CD4-positive, alpha-beta T cell (primary cell): ENCODE measurements at regions of chr2 and their contacts with region 1.

Region 1: DNA sequence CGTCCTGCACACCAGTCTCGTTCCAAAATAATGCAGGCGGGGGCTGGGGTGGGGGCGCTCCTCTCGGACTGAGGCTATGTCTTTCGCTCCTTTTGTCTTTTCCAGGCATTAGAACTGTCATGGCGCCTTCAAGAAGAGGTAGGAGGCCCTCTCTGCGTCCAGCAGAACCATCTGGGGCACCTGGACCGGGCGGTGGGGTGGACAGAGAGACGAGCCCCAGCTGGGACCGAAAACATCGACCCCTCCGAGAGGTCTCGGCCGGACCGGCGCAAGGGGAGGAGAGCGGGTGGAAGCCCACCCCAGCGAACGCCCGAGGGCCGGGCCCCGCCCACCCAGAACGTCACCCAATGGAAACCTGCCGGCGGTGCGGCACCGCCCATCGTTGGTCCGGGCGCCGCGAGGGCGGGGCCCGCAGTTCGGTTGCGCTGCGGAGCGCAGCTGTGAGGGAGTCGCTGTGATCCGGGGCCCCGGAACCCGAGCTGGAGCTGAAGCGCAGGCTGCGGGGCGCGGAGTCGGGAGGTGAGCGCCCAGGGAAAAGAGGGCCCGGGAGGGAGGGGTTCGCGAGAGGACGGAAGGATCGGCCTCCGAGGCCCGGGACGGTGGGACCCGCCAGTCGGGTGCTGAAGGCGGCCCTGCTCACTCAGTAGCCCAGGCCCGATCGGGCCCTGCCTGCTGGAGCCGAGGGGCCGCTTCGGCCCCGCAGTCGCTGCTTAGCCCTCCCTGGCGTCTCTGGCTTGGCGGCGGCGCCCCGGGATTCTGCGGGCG is at the start of gene NRBP1:
- DNase-seq: peak; percentile 77 to 95 (median 90)
- ATAC-seq: peak; percentile 93
- H3K4me3 ChIP-seq: peak within 1 kb of the TSS; percentile 95
- H3K4me3 Mint-ChIP-seq: peak within 1 kb of the TSS; percentile 100
- H3K27ac ChIP-seq: peak within 1 kb of the TSS; percentile 80 to 90
- H3K27ac Mint-ChIP-seq: peak within 1 kb of the TSS; percentile 96
- H3K4me1 ChIP-seq: peaks cover 40% of the 10 kb centered on the region
- H3K4me1 Mint-ChIP-seq: peaks cover 41% of the 10 kb centered on the region
- H3K27me3 ChIP-seq: no peaks in the 10 kb centered on the region
- H3K27me3 Mint-ChIP-seq: no peaks in the 10 kb centered on the region
- CTCF ChIP-seq: no peak
- total RNA-seq, gene NRBP1: 169 to 181 TPM

Region 2: GRCh38 chr2:27356382-27357181 is 71.8 kb before region 1 on chr2 and contains the start of gene GTF3C2:
- CTCF ChIA-PET with region 1: interaction called, 3 read pairs
- POLR2A ChIA-PET with region 1: interaction called, 7 read pairs
- intact Hi-C with region 1: loop called in 1 of 2 experiments (anchors 2 kb)
- DNase-seq: peak; percentile 82 to 97 (median 88)
- ATAC-seq: peak; percentile 78
- H3K4me3 ChIP-seq: peak within 1 kb of the TSS; percentile 86
- H3K4me3 Mint-ChIP-seq: peak within 1 kb of the TSS; percentile 96
- H3K27ac ChIP-seq: peak within 1 kb of the TSS; percentile 87 to 89
- H3K27ac Mint-ChIP-seq: peak within 1 kb of the TSS; percentile 99
- H3K4me1 ChIP-seq: peaks cover 44% of the 10 kb centered on the region
- H3K4me1 Mint-ChIP-seq: peaks cover 56% of the 10 kb centered on the region
- H3K27me3 ChIP-seq: no peaks in the 10 kb centered on the region
- H3K27me3 Mint-ChIP-seq: no peaks in the 10 kb centered on the region
- CTCF ChIP-seq: no peak
- total RNA-seq, gene GTF3C2: 54.6 to 56.8 TPM

Region 3: GRCh38 chr2:27390822-27391679 is 37.3 kb before region 1 on chr2:
- CTCF ChIA-PET with region 1: interaction called, 5 read pairs
- POLR2A ChIA-PET with region 1: interaction called, 8 read pairs
- intact Hi-C with region 1: loop called in 1 of 2 experiments (anchors 5 kb)
- DNase-seq: peak in 3 of 14 experiments; percentile 73 to 77 (median 74)
- ATAC-seq: peak; percentile 80
- H3K4me3 ChIP-seq: no peak overlapping the region
- H3K4me3 Mint-ChIP-seq: peak overlapping the region; percentile 32
- H3K27ac ChIP-seq: peak overlapping the region; percentile 47 to 52
- H3K27ac Mint-ChIP-seq: peak overlapping the region; percentile 86
- H3K4me1 ChIP-seq: peaks cover 25% of the 10 kb centered on the region
- H3K4me1 Mint-ChIP-seq: peaks cover 32% of the 10 kb centered on the region
- H3K27me3 ChIP-seq: no peaks in the 10 kb centered on the region
- H3K27me3 Mint-ChIP-seq: no peaks in the 10 kb centered on the region
- CTCF ChIP-seq: no peak

Region 4: GRCh38 chr2:27441958-27442919 is 13.8 kb after region 1 on chr2 and contains the start of gene KRTCAP3:
- CTCF ChIA-PET with region 1: interaction called, 3 read pairs
- POLR2A ChIA-PET with region 1: interaction called, 11 read pairs
- intact Hi-C with region 1: no loop called
- DNase-seq: peak; percentile 45 to 77 (median 60)
- ATAC-seq: peak; percentile 96
- H3K4me3 ChIP-seq: no peak within 1 kb of the TSS
- H3K4me3 Mint-ChIP-seq: peak within 1 kb of the TSS; percentile 5
- H3K27ac ChIP-seq: no peak within 1 kb of the TSS
- H3K27ac Mint-ChIP-seq: peak within 1 kb of the TSS; percentile 61
- H3K4me1 ChIP-seq: peaks cover 8% of the 10 kb centered on the region
- H3K4me1 Mint-ChIP-seq: peaks cover 20% of the 10 kb centered on the region
- H3K27me3 ChIP-seq: no peaks in the 10 kb centered on the region
- H3K27me3 Mint-ChIP-seq: no peaks in the 10 kb centered on the region
- CTCF ChIP-seq: peak; percentile 37
- total RNA-seq, gene KRTCAP3: 11.5 to 12.8 TPM